ENCODE measurements at regions of chr17 and their contacts with region 1.

Region 1: DNA sequence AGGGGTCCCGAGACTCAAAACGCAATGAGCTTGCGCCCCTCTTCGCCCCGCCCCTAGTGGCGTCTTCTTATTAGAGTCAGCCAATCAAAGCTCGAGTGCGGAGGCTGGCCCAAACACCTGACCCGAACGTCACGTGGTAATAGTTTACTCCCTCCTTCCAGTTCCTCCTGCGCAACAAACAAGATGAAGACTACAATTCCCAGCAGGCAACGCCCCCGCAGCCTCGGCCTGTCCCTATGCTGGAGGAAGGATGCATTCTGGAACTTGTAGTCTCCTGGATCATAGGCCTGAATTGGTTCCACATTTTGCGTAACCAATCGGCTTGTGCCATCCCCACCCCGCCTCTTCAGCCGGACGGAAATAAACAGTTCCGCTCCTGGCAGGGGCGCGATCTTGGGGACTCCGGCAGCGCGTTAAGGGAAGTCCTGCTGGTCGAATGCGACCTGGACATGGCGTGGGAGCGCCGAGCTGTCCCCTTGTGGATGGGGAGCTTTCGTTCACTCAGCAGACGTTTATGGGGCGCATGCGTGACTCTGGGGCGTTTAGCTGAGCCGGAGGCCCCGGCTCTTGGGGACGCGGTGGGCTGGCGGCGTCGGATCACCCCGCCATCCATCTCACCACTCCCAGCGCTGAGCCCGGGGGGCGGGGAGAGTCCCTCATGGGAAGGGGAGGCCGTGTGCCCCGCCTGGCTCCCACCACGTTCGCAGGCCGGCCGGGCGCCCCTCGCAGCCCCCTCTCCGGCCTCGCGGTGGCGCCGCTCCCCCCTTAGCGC is at the start of gene WBP2:
- DNase-seq: peak; percentile 99
- H3K4me3 ChIP-seq: peak within 1 kb of the TSS; percentile 94
- H3K27ac ChIP-seq: peak within 1 kb of the TSS; percentile 90
- H3K27me3 ChIP-seq: no peaks in the 10 kb centered on the region
- CTCF ChIP-seq: peak; percentile 22; the same call in 1 of the 2 replicates
- polyA plus RNA-seq, gene WBP2: 33.3 and 35.3 TPM in 2 replicates

Region 2: GRCh38 chr17:75845049-75845860 is 10.2 kb before region 1 on chr17:
- CTCF ChIA-PET with region 1: interaction called, 18 read pairs
- POLR2A ChIA-PET with region 1: interaction called, 5 read pairs
- DNase-seq: no peak
- H3K4me3 ChIP-seq: no peak overlapping the region
- H3K27ac ChIP-seq: no peak overlapping the region
- H3K27me3 ChIP-seq: no peaks in the 10 kb centered on the region
- CTCF ChIP-seq: peak; percentile 72

Region 3: DNA sequence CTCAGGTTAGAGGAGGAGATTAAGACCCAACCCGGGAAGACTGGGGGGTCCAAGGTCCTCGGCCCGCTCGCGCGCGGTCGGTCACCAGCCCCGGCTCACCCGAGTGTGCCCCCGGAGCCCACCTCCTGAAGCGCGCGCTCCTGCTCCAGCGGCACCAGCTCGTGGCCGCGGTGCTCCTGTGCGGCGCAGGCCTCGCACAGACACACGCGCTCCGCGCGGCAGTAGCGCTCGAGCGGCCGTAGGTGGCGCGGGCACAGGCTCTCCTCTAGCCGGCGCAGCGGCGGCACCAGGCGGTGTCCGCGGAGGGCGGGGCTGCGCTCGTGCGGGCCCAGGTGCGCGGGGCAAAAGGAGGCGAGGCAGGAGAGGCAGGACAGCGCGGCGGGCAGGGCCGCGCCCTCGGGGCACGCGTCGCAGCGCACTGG is 22.3 kb after region 1 on chr17:
- CTCF ChIA-PET with region 1: interaction called, 5 read pairs
- POLR2A ChIA-PET with region 1: interaction called, 12 read pairs
- DNase-seq: no peak
- H3K4me3 ChIP-seq: peak overlapping the region; percentile 73
- H3K27ac ChIP-seq: peak overlapping the region; percentile 89
- H3K27me3 ChIP-seq: peaks cover 6% of the 10 kb centered on the region
- CTCF ChIP-seq: peak; percentile 49

Region 4: DNA sequence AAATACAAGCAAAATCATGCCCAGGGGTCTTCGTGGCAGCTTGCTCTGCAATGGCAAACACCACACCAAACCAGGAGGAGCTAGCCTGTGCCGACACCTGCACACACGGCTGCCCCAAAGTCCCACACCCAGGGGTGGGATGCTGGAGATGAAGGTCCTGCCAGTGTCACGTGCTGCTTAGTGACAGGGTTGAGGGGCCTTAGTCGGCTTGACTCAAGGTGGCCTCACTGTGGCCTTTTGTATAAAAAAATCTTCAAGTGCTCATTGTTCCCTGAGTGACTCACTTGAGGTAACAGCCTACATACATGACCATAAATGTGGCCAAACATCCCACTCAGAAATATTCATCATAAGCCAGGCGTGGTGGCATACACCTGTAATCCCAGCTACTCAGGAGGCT is 34.0 kb after region 1 on chr17:
- CTCF ChIA-PET with region 1: interaction called, 4 read pairs
- POLR2A ChIA-PET with region 1: interaction called, 12 read pairs
- DNase-seq: no peak
- H3K4me3 ChIP-seq: no peak overlapping the region
- H3K27ac ChIP-seq: no peak overlapping the region
- H3K27me3 ChIP-seq: no peaks in the 10 kb centered on the region
- CTCF ChIP-seq: no peak

Region 5: DNA sequence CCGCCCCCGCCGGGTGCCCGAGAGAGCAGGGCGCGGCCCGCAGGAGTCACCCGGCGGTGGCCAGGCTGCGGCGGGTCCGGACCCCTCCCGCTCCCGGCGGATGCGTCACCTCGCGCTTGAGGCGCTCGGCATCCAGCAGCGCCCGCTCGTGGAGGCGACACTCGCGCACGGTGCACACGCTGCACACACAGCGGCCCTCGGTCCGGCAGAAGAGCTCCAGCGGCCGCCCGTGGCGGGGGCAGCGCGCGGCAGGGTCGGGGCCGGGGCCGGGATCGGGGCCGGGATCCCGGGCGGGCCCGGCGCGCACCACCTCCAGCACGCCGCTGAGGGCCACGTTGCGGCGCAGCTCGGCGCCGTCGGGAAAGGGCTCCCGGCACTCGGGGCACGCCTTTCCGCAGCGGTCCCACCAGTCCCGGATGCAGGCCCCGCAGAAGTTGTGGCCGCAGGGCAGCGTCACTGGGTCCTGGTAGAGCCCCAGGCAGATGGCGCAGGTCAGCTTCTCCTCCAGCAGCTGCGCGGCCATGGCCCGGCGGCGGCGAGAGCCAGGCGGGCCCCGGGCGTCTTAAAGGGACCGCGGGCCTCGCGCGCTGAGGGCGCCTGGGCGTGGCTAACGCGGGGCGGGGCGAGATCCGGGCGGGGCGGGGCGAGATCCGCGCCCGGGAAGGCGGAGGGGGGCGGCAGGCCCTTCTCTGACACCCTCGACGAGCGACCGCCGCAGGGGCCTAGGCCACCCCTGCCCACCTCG is 41.1 kb after region 1 on chr17 and contains the start of gene TRIM65:
- CTCF ChIA-PET with region 1: no interaction called
- POLR2A ChIA-PET with region 1: interaction called, 14 read pairs
- DNase-seq: no peak
- H3K4me3 ChIP-seq: peak within 1 kb of the TSS; percentile 88
- H3K27ac ChIP-seq: peak within 1 kb of the TSS; percentile 31
- H3K27me3 ChIP-seq: no peaks in the 10 kb centered on the region
- CTCF ChIP-seq: no peak
- polyA plus RNA-seq, gene TRIM65: 6.5 and 8.7 TPM in 2 replicates

Region 6: GRCh38 chr17:76121932-76122430 is 266.5 kb after region 1 on chr17:
- CTCF ChIA-PET with region 1: no interaction called
- POLR2A ChIA-PET with region 1: interaction called, 10 read pairs
- DNase-seq: no peak
- H3K4me3 ChIP-seq: no peak overlapping the region
- H3K27ac ChIP-seq: no peak overlapping the region
- H3K27me3 ChIP-seq: peaks cover 5% of the 10 kb centered on the region
- CTCF ChIP-seq: no peak